Mammary epithelial cell (primary cell): ENCODE measurements at regions of chrX and their contacts with region 1.

Region 1: GRCh38 chrX:119374736-119375135 is 24.4 kb upstream of the SLC25A43 start:
- DNase-seq: peak; percentile 29
- H3K4me3 ChIP-seq: no peak overlapping the region
- H3K27ac ChIP-seq: peak overlapping the region; percentile 40
- H3K4me1 ChIP-seq: peaks cover 21% of the 10 kb centered on the region
- H3K27me3 ChIP-seq: no peaks in the 10 kb centered on the region
- CTCF ChIP-seq: no peak

Region 2: GRCh38 chrX:119266364-119266995 is 108.3 kb before region 1 on chrX:
- CTCF ChIA-PET with region 1: no interaction called
- dilution Hi-C with region 1: loop called (anchors 5 kb)
- in situ Hi-C with region 1: no loop called
- intact Hi-C with region 1: no loop called
- DNase-seq: peak; percentile 6
- H3K4me3 ChIP-seq: no peak overlapping the region
- H3K27ac ChIP-seq: no peak overlapping the region
- H3K4me1 ChIP-seq: no peaks in the 10 kb centered on the region
- H3K27me3 ChIP-seq: no peaks in the 10 kb centered on the region
- CTCF ChIP-seq: peak; percentile 62 to 81

Region 3: GRCh38 chrX:119359618-119360382 is 14.9 kb before region 1 on chrX:
- CTCF ChIA-PET with region 1: no interaction called
- dilution Hi-C with region 1: no loop called
- in situ Hi-C with region 1: no loop called
- intact Hi-C with region 1: no loop called
- DNase-seq: no peak
- H3K4me3 ChIP-seq: no peak overlapping the region
- H3K27ac ChIP-seq: no peak overlapping the region
- H3K4me1 ChIP-seq: no peaks in the 10 kb centered on the region
- H3K27me3 ChIP-seq: no peaks in the 10 kb centered on the region
- CTCF ChIP-seq: no peak

Region 4: DNA sequence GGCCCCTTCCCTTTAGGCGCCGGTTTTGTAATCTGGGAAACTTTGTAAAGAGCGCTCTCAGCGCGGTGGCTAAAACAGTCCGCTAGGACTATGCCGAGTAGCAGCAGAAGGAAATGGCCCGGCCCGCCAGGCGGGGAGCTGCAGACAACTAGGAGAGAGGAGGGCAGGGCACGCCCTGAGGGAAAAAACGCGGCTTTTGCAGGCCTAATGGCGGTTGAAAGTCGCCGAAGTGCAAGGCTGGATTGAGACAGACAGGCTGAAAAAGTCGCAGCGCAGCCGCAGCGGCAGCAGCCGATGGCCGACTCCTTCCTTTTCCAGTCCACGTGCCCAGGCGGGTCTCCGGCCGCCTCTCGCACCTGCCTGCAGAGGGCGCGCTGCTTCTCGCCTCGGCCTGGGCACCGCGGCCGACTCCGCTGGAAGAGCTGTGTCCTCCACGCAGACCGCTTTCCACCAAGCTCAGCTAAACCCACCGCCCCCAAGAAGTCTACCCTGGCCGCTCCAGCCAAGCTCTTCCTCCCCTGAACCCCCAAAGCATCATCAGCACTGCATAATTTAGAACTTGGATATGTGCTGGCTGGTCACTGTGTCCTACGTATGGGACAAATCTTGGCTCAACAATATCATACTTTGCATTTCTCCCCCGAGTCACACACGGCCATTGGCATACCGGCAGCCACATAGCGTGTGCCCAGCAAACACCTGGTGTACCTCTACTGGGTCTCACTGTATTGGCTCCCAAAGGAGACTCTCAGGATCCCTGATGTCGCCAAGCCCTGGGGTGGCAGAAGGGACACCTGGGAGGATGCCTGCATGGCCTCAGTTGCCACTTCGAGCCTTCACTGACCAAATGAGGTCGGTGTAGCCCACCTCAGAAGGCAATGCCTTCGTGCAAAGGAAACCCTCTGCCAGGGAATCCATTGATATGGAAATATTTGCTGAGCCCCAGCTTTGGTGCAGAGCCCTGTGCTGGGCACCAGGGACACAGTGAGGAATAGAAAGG is 108.0 kb after region 1 on chrX:
- CTCF ChIA-PET with region 1: no interaction called
- dilution Hi-C with region 1: no loop called
- in situ Hi-C with region 1: no loop called
- intact Hi-C with region 1: no loop called
- DNase-seq: peak; percentile 42
- H3K4me3 ChIP-seq: peak overlapping the region in 2 of 3 experiments; percentile 18 to 30
- H3K27ac ChIP-seq: no peak overlapping the region
- H3K4me1 ChIP-seq: peaks cover 12% of the 10 kb centered on the region
- H3K27me3 ChIP-seq: no peaks in the 10 kb centered on the region
- CTCF ChIP-seq: peak; percentile 45 to 62

Region 5: DNA sequence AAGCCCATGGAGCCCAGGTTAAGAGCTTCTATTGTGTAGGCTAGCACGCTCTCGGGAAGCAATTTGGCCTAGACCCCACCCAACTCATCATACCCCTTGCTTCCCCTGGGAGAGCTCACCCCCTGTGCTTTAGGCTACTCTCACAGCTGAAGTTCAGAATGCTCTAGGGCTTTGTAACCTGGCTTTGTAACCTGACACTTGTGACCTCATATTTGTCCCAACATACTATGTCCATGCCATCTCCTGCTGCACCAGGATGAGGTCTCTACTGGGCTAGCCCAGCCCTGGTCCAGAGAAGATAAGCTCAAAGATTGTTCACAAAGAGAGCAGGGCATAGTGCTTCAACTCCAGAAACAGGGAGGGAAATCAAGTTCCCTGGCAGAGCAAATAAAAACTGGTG is 145.5 kb after region 1 on chrX:
- CTCF ChIA-PET with region 1: no interaction called
- dilution Hi-C with region 1: no loop called
- in situ Hi-C with region 1: no loop called
- intact Hi-C with region 1: no loop called
- DNase-seq: no peak
- H3K4me3 ChIP-seq: no peak overlapping the region
- H3K27ac ChIP-seq: no peak overlapping the region
- H3K4me1 ChIP-seq: no peaks in the 10 kb centered on the region
- H3K27me3 ChIP-seq: no peaks in the 10 kb centered on the region
- CTCF ChIP-seq: no peak